ENCODE measurements at regions of chr3 and their contacts with region 1.

Region 1: DNA sequence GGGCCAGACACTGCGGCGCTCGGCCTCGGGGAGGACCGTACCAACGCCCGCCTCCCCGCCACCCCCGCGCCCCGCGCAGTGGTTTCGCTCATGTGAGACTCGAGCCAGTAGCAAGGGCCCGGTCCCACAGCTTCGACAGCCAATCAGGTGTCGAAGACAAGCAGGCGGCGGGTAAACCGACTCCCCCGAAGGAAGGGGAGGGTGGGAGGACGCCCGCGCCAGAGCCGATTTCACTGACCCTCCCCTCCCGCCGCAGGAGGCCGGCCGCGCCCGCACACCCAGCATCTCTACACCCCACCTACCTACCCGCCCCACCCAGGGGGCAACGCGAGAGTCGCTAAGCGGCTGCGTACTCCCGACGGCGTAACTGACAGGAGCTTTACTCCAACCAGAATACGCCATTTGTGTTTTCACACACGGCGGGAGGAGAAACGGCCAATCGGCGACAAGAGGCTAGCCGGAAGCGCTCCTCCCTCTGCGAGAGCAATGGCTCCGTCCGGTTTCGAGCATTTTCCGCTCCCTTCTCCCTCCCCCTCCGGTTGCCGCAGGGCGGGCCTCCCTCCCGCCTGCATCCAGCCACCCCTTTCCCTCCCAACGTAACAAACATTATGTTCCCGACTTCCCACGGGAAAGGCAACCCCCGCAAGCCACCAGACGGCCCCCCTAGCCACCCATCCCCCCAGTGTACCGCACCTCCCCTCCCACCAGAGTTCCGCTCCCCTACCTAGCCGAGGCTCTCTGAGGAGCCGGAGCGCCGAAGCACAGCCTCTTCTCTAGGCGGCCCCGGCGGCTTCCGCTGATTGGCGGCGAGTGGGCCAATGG is 504 bp upstream of the SETD5 start:
- DNase-seq: peak; percentile 100
- H3K4me3 Mint-ChIP-seq: peak overlapping the region; percentile 90
- H3K27ac Mint-ChIP-seq: peak overlapping the region; percentile 99
- H3K4me1 Mint-ChIP-seq: peaks cover 59% of the 10 kb centered on the region
- H3K27me3 Mint-ChIP-seq: no peaks in the 10 kb centered on the region

Region 2: DNA sequence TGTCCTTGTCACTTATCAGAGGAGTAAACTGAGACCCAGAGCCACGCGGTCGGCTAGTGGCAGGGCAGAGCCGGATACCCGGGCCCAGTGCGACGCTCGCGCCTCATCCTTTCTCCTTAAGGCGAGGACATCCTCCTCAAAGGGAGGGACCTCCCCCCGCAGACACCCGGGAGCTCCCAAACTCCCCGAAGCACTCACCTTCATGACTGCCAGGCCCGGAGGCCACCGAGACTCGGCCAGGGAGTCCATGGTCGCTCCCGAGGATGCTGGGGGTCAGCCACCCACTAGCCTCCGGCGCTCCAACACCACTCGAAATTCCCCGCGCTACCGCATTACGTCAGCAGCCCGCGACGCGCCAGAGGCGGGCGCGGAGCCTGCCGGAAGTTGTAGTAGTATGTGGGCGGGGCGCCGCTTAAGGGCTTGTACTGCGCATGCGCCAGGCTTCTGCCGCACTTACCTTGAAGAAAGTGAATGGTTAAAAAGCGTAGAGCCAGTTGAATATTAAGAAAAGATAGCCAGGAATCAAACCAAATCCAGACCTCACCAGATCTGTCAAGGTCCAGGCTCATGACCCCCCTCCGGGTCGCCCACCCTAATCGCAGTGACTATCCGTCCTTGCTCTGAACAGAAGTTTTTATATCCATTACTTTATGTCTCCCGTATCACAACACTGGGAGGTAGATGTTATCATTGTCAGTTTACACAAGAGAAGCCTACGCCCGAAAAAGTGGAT is 433.6 kb before region 1 on chr3 and contains the start of gene RAD18:
- intact Hi-C with region 1: loop called (anchors 1 kb)
- DNase-seq: peak; percentile 98
- H3K4me3 Mint-ChIP-seq: peak within 1 kb of the TSS; percentile 94
- H3K27ac Mint-ChIP-seq: peak within 1 kb of the TSS; percentile 94
- H3K4me1 Mint-ChIP-seq: peaks cover 29% of the 10 kb centered on the region
- H3K27me3 Mint-ChIP-seq: peaks cover 2% of the 10 kb centered on the region
- total RNA-seq, gene RAD18: 52.8 and 55.1 TPM in 2 replicates

Region 3: DNA sequence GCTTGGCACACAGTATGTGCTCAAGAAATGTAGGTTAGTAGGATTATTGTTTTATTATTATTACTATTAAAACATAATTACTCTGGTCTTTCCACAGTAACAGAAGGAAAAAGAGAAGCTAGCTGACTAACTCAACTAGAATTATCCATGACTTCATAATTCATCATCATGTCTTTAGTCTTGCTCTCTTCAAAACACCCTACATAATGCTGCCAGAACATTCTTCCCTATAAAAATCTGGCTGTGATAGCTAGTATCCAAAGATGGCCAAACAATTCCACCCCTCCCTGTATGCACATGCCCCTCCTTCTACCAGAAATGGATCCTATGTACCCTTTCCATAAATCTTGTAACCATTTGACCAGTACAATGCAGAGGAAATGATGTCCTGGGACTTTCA is 98.7 kb before region 1 on chr3:
- intact Hi-C with region 1: no loop called
- DNase-seq: no peak
- H3K4me3 Mint-ChIP-seq: no peak overlapping the region
- H3K27ac Mint-ChIP-seq: no peak overlapping the region
- H3K4me1 Mint-ChIP-seq: peaks cover 6% of the 10 kb centered on the region
- H3K27me3 Mint-ChIP-seq: peaks cover 9% of the 10 kb centered on the region

Region 4: DNA sequence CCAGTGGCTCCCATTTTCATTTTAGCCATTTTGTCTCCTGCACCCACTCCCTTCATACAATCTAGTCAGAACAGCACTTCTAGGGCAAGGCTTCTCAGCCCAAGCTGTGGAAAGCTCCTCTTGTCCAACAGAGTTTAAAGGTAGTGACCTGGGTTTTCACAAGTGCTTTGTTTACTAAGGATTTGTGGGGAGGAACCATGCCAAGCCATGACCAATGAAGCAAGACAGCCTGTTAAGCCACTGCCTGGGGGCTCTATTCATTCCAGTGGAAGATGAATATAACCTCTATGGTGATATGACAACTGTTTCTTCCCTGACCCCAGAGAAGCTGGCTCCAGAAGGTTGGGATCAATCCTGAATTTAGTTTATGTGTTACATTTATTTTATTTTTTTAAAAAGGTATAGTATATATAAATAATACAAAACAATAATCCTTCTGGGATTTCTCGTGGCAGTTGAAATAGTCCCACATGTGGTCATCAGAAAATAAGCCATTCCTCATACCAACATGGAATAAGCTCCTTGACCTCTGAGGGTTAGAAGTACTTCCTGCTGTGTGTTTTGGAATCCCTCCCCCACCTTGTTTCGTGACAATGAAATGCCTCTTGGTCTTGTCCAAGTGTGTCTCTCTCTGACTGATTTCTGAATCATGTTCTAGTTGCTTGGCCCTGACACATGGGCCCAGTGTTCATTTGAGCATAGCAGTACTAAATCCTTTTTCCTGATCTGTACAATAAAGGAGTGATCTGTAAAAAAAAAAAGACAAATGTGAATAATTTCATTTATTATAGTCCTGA is 47.4 kb before region 1 on chr3:
- intact Hi-C with region 1: no loop called
- DNase-seq: no peak
- H3K4me3 Mint-ChIP-seq: no peak overlapping the region
- H3K27ac Mint-ChIP-seq: no peak overlapping the region
- H3K4me1 Mint-ChIP-seq: peaks cover 6% of the 10 kb centered on the region
- H3K27me3 Mint-ChIP-seq: no peaks in the 10 kb centered on the region

Region 5: GRCh38 chr3:9422712-9423424 is 26.0 kb after region 1 on chr3:
- intact Hi-C with region 1: loop called (anchors 1 kb)
- DNase-seq: no peak
- H3K4me3 Mint-ChIP-seq: no peak overlapping the region
- H3K27ac Mint-ChIP-seq: peak overlapping the region; percentile 65
- H3K4me1 Mint-ChIP-seq: peaks cover 33% of the 10 kb centered on the region
- H3K27me3 Mint-ChIP-seq: no peaks in the 10 kb centered on the region

Region 6: DNA sequence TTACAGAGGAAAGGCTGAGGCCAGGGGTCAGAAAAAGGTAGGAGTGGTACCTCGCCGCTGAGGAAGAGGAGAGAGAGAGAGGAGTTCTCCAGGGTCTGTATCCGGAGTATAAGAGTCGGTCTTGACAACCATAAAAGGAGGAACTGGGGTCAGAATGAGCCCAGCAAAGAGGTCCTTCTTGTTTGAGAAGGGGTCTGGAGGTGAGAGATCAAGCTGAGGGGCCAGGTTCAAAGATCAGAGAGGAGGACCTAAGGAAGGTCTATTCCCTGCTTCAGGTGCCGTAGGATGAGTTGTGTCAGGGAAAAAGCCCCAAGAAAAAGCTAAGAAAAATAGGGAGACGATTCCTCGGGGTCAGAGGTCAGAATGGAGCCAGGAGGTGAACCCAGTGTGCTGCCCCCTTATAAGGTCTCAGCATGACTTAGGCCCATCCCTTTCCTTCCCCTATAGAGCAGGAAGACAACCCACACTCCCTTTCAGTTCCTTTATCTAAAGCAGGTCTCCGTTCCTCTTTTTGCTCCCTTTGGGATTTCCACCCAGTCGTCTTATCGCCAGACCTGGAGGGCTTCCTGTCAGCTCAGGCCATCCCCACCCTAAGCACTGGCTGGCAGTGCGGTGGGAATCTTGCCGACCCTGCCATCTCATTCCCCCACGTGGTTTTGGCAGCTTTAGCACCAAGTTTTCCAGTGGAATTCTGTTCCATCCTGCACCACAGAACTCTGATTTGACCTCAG is 253.0 kb after region 1 on chr3:
- intact Hi-C with region 1: loop called (anchors 1 kb)
- DNase-seq: peak; percentile 71
- H3K4me3 Mint-ChIP-seq: peak overlapping the region; percentile 99
- H3K27ac Mint-ChIP-seq: peak overlapping the region; percentile 92
- H3K4me1 Mint-ChIP-seq: peaks cover 17% of the 10 kb centered on the region
- H3K27me3 Mint-ChIP-seq: peaks cover 2% of the 10 kb centered on the region

Region 7: GRCh38 chr3:10248184-10249080 is 851.5 kb after region 1 on chr3 and contains the start of gene TATDN2:
- intact Hi-C with region 1: loop called (anchors 2 kb)
- DNase-seq: peak; percentile 98
- H3K4me3 Mint-ChIP-seq: peak within 1 kb of the TSS; percentile 92
- H3K27ac Mint-ChIP-seq: peak within 1 kb of the TSS; percentile 98
- H3K4me1 Mint-ChIP-seq: peaks cover 46% of the 10 kb centered on the region
- H3K27me3 Mint-ChIP-seq: no peaks in the 10 kb centered on the region
- total RNA-seq, gene TATDN2: 70.9 and 74.4 TPM in 2 replicates

Measured in activated CD4-positive, alpha-beta T cell treated with anti-CD3 and anti-CD28 coated beads, Interleukin-2, amount 10 ng/mL, durations not matched to agents 24 days and 14 days (primary cell).